Activated CD8-positive, alpha-beta memory T cell treated with anti-CD3 and anti-CD28 coated beads, Interleukin-2, amount 10 ng/mL, durations not matched to agents 7 days and 5 days (primary cell): ENCODE measurements at regions of chr17 and their contacts with region 1.

Region 1: GRCh38 chr17:78865682-78866390 is 25.2 kb upstream of the USP36 start:
- DNase-seq: peak; percentile 73
- ATAC-seq: peak; percentile 82
- H3K4me3 Mint-ChIP-seq: no peak overlapping the region
- H3K27ac Mint-ChIP-seq: no peak overlapping the region
- H3K4me1 Mint-ChIP-seq: no peaks in the 10 kb centered on the region
- H3K27me3 Mint-ChIP-seq: peaks cover 3% of the 10 kb centered on the region

Region 2: DNA sequence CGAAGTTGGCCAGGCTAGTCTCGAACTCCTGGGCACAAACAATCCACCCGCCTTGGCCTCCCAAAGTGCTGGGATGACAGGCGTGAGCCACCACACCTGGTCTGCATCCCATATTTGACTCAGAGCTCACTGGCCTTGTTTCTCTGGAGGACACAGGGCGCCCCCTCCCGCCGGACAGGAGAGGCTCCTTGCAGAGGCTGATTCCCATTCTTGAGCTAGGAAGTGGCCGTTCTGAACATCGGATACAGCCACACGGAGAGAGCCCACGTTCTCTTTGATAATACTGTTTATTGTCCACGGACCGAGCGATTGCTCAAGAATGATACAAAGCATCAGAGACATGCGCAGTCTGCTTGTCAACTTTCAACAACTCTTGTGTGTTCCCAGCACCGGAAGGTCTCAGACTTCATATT is 13.1 kb before region 1 on chr17:
- CTCF ChIA-PET with region 1: interaction called, 11 read pairs
- DNase-seq: no peak
- ATAC-seq: no peak
- H3K4me3 Mint-ChIP-seq: no peak overlapping the region
- H3K27ac Mint-ChIP-seq: no peak overlapping the region
- H3K4me1 Mint-ChIP-seq: no peaks in the 10 kb centered on the region
- H3K27me3 Mint-ChIP-seq: no peaks in the 10 kb centered on the region

Region 3: DNA sequence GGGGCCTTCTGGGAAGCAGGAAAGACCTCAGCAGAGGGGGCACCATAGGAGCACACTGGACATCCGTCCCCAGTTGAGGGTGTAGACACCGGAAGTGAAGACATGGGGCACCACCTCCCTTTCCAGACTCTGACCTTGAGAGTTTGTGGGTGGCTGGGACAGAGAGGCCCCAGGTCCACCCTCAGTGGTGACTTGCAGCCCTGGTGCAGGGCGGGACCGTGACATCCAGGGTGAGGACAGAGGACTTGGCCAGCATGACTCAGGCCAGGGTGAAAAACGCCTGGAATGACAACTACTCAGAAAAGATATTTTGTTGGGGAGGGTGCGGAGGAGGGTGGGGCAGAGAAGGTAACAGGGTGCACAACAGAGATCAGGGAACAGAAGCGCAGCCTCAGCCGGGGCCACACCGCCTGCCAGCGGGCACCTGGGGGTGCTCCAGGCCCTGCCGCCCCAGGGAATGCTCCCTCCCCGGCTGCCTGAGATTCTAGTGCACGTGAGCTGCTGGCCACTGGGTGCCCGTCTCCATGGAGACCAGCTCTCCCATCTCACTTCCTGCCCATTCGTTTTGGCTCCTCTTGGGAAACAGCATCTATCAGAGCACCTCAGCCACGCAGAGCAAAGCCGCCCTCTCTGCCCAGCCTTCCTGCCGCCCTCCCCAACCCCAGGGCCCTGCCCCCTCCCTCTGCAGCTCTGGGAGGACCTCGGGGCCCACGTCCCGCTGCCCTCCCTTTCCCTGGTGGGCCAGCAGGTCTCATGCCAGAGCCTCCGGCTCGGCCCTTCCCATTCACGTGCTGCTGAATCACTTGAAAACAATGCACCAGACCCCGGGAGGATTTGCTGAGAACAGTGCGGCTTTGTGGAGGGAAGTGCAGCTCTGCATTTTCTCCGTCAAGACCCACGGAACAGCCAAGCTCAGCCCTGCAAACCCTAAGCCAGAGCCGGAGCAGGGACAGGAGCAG is 17.6 kb after region 1 on chr17:
- CTCF ChIA-PET with region 1: interaction called, 13 read pairs
- DNase-seq: no peak
- ATAC-seq: no peak
- H3K4me3 Mint-ChIP-seq: no peak overlapping the region
- H3K27ac Mint-ChIP-seq: peak overlapping the region; percentile 24
- H3K4me1 Mint-ChIP-seq: peaks cover 32% of the 10 kb centered on the region
- H3K27me3 Mint-ChIP-seq: peaks cover 25% of the 10 kb centered on the region

Region 4: DNA sequence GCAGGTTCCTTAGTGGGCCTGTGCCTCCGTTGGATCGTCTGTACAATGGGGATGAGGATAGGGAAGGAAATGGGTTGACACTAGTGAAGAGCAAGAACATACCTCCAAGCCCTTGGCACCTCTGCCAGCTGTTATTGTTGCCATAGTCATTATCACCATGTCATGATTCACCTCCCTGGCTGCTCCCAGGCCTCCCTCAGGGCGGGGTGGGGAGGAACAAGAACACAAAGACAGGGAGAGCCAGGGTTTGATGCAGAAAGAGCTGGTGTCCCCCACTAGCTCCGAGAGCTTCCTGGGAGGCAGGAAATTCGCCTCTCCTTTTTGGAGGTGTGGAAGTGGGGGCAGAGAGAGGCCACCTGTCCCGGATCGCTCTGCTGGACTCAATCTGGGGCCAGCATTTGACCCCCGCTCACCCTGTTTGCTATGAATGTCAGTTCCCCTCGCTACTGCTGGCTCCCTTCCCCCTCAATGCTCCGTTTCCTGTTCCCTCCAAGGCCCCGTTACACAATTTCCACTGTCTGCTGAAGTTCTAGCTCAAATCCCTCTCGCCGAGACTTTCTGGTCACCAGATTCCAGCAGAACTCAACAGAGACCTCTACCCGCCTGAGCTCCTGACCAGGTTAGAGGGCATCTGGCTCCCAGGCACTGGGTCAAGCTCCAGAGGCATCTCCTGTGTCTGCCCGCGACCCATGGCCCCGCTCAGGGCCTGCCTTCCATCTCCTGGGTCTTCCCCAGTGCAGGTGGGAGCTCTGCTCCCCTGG is 50.2 kb after region 1 on chr17:
- CTCF ChIA-PET with region 1: interaction called, 13 read pairs
- DNase-seq: no peak
- ATAC-seq: no peak
- H3K4me3 Mint-ChIP-seq: no peak overlapping the region
- H3K27ac Mint-ChIP-seq: peak overlapping the region; percentile 12
- H3K4me1 Mint-ChIP-seq: no peaks in the 10 kb centered on the region
- H3K27me3 Mint-ChIP-seq: peaks cover 5% of the 10 kb centered on the region

Region 5: DNA sequence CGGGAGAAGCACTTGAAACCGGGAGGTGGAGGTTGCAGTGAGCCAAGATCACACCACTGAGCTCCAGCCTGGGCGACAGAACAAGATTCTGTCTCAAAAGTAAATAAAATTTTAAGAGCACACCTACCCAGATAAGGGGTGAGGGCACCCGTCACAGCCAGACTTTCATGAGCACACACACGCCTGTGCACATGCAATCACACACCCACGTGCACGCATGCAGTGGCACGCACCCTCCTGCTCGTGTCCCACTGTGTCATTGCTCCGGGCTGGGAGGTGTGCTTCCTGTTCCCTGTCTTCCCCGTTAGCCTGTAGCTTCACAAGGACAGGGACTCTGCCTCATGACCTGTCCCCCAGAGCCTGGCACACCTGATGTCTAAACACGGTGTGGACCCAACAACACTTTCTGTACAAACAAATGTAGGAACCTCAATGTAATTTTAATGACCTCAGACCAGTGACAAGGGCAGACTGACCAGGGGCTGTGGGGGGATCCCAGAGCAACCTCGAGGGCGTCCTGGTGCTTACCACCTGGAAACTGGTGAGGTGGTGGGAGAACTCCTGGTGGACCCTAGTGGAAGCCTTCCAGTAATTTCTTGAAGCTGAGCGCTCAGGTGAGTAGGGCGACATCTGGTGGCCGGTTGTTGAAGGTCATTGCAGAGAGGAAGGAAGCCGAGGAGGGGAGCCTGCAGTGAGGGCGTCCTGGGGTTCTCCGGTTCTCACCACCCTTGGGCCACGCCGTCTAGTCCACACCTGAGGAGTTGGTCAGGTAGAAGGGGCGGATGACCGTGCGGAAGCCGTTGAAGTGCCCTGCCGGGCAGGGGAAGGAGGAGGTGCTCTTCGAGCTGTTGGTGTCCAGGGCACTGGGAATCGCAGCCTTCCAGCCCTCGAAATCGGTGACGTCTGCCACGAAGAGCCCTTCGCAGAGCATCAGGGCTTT is 105.3 kb after region 1 on chr17:
- CTCF ChIA-PET with region 1: interaction called, 70 read pairs
- DNase-seq: peak; percentile 83
- ATAC-seq: peak; percentile 63
- H3K4me3 Mint-ChIP-seq: no peak overlapping the region
- H3K27ac Mint-ChIP-seq: peak overlapping the region; percentile 64
- H3K4me1 Mint-ChIP-seq: peaks cover 2% of the 10 kb centered on the region
- H3K27me3 Mint-ChIP-seq: no peaks in the 10 kb centered on the region